ENCODE measurements at regions of chr12 and their contacts with region 1.

Region 1: GRCh38 chr12:6470375-6471163 is at the start of gene VAMP1:
- DNase-seq: peak; percentile 96
- CTCF ChIP-seq: no peak

Region 2: DNA sequence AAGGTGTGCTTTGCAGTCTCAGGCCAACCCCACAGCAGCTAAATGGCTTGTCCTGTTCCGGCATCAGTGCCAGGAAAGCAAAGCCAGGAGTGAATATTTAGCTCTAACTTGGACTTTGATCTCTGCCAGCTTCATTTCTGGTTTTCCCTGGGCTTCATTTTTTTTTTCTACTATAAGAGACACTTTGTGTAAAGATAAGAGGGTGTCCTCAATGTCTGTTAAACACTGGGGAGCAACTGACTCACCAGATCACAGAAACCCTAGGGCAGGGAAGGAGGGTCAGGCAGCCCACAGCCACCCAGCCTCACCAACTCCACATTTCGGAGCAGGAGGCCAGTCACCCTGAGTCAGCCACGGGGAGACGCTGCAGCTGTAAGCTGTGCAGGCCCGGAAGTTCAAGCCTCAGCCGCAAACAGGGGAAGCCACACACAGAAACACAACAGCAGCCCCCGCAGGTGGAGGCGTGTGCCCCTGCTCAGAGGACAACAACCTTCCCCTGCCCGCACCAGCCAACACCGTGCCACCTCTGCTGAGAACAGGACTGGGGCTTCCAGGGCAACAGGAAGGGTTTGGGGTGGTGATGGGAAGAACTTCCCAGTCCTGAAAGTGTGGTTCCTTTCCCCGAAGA is 135.0 kb before region 1 on chr12:
- CTCF ChIA-PET with region 1: interaction called, 15 read pairs
- POLR2A ChIA-PET with region 1: interaction called, 9 read pairs
- DNase-seq: peak; percentile 92
- CTCF ChIP-seq: peak; percentile 73

Region 3: DNA sequence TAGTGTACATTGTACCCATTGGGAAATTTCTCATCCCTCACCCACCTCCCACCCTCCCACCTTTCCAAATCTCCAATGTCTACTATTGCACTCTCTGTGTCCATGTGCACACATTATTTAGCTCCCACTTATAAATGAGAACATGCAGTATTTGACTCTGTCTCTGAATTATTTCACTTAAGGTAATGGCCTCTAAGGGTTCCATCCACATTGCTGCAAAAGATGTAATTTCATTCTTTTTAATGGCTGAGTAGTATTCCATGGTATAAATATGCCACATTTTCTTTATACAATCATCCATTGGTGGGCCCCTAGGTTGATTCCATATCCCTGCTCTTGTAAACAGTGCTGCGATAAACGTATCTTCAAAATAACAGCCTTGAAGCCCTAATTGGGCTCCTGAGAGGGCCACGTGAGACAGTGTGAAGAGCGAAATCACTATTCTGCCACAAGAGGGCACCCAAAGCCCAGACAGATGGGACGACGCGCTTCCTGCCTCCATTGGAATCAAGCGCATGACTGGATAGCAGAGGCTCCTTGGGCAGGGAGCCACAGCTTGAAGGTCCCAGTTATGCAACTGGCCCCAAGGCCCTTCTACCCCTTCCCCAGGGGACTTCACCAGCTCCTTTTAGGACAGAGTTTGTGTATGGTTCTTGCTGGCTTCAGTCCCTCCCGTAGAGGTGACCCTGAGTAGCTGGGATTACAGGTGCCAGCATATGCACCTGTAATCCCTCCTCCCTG is 47.1 kb before region 1 on chr12:
- CTCF ChIA-PET with region 1: interaction called, 89 read pairs
- POLR2A ChIA-PET with region 1: interaction called, 9 read pairs
- DNase-seq: peak; percentile 85
- CTCF ChIP-seq: peak; percentile 83

Region 4: GRCh38 chr12:6443361-6443983 is 27.1 kb before region 1 on chr12:
- CTCF ChIA-PET with region 1: interaction called, 55 read pairs
- POLR2A ChIA-PET with region 1: interaction called, 16 read pairs
- DNase-seq: peak; percentile 39
- CTCF ChIP-seq: no peak

Region 5: GRCh38 chr12:6493497-6494257 is 23.1 kb after region 1 on chr12 and contains the start of gene NCAPD2:
- CTCF ChIA-PET with region 1: interaction called, 10 read pairs
- POLR2A ChIA-PET with region 1: interaction called, 31 read pairs
- DNase-seq: peak; percentile 96
- CTCF ChIP-seq: no peak

Region 6: DNA sequence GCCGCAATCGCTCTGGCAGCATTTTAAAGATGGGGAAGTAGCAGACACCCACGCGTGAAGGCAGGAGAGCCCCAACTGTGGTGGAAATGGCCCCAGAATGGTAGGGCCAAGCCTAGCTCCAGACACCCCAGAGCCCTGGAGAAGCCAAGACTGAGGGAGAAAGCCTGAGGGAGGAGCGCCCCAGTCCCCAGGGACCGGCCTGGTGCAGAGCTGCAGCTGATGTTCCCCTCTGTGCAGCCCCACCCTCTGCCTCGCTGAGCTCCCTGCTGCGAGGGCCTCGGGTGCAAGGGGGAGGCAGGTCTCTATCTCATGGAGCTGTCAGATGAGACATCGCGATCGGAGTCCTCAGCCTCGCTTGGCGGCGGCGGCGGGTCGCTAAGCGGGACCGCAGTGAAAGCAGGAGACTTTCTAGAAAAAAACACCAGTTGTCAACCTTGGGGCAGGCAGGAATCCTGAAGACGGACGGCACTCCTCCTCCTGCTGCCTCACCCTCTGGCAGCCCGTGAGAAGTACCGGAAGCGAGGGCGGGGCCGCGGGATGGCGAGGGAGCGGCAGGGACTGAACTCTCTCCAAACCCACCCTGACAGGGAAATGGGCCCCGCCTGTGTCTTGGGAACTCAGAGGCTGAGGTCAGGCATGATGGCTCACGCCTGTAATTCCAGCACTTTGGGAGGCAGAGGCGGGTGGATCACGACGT is 69.8 kb after region 1 on chr12:
- CTCF ChIA-PET with region 1: interaction called, 24 read pairs
- POLR2A ChIA-PET with region 1: interaction called, 26 read pairs
- DNase-seq: peak; percentile 66
- CTCF ChIP-seq: no peak